PC-3 (cell line): ENCODE measurements at regions of chr6 and their contacts with region 1.

Region 1: GRCh38 chr6:13487122-13488014 is at the start of gene GFOD1:
- DNase-seq: peak; percentile 89
- ATAC-seq: peak; percentile 81
- H3K4me3 ChIP-seq: peak within 1 kb of the TSS; percentile 85
- H3K27ac ChIP-seq: peak within 1 kb of the TSS; percentile 46
- H3K4me1 ChIP-seq: peaks cover 28% of the 10 kb centered on the region
- H3K27me3 ChIP-seq: no peaks in the 10 kb centered on the region
- CTCF ChIP-seq: peak; percentile 23; the same call in 1 of the 2 replicates
- total RNA-seq, gene GFOD1: 16.0 and 21.8 TPM in 2 replicates

Region 2: DNA sequence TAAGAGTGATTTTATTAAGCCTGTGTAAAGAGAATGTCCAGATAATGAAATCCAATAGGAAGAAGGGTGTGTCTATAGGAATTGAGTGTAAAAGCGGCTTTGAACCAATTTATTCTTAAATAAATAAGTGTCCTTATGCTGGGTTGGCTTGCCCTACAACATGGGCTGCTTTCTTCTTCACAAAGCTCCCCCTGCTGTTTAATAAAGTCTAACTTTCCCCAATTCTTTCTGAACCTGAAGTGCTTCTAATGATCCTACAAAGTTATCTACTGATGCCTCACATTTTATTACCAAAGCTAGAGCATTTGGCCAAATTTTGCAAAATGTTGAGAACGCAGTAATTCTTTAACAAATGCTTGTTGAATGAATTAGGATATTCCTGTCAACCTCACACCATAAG is 50.7 kb after region 1 on chr6:
- CTCF ChIA-PET with region 1: no interaction called
- POLR2A ChIA-PET with region 1: no interaction called
- intact Hi-C with region 1: loop called (anchors 5 kb)
- DNase-seq: peak; percentile 70
- ATAC-seq: peak; percentile 66
- H3K4me3 ChIP-seq: no peak overlapping the region
- H3K27ac ChIP-seq: no peak overlapping the region
- H3K4me1 ChIP-seq: no peaks in the 10 kb centered on the region
- H3K27me3 ChIP-seq: no peaks in the 10 kb centered on the region
- CTCF ChIP-seq: peak; percentile 72

Region 3: GRCh38 chr6:13574149-13574570 is 86.8 kb after region 1 on chr6:
- CTCF ChIA-PET with region 1: interaction called, 10 read pairs
- POLR2A ChIA-PET with region 1: interaction called, 4 read pairs
- intact Hi-C with region 1: no loop called
- DNase-seq: peak; percentile 95
- ATAC-seq: peak; percentile 81
- H3K4me3 ChIP-seq: peak overlapping the region; percentile 79
- H3K27ac ChIP-seq: peak overlapping the region; percentile 91
- H3K4me1 ChIP-seq: peaks cover 11% of the 10 kb centered on the region
- H3K27me3 ChIP-seq: no peaks in the 10 kb centered on the region
- CTCF ChIP-seq: peak; percentile 39

Region 4: GRCh38 chr6:13624871-13625288 is 137.5 kb after region 1 on chr6:
- CTCF ChIA-PET with region 1: no interaction called
- POLR2A ChIA-PET with region 1: no interaction called
- intact Hi-C with region 1: no loop called
- DNase-seq: peak; percentile 69
- ATAC-seq: peak; percentile 85
- H3K4me3 ChIP-seq: no peak overlapping the region
- H3K27ac ChIP-seq: no peak overlapping the region
- H3K4me1 ChIP-seq: no peaks in the 10 kb centered on the region
- H3K27me3 ChIP-seq: no peaks in the 10 kb centered on the region
- CTCF ChIP-seq: peak; percentile 75